GM18951 (cell line): ENCODE measurements at regions of chr18 and their contacts with region 1.

Region 1: GRCh38 chr18:23828426-23828825 is 139.2 kb downstream of the LAMA3 start:
- POLR2A ChIP-seq: no peak

Region 2: DNA sequence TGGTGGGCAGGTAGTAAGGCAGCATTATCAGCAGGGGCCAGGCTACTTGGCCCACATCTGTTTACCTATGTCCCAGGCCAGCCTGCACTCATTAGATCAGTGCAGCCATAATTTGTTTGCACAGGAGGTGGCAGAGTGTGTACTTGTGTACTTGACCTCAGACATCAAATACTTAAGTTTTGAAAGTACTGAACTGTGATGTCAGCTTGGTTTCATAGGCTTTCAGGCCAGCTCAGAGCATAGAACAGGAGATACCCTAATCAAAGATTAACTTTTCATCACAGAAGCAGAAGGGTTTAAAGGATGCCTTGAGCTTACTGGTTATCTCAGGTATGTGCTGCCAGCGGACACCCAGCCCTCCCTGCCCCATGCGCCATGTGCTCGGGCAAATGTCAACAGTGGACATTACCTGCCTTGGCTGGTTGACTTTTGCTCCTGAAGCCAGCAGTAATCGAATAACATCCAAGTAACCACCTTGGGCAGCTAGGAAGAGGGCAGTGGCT is 198.9 kb before region 1 on chr18:
- in situ Hi-C with region 1: loop called (anchors 5 kb)
- POLR2A ChIP-seq: no peak

Region 3: DNA sequence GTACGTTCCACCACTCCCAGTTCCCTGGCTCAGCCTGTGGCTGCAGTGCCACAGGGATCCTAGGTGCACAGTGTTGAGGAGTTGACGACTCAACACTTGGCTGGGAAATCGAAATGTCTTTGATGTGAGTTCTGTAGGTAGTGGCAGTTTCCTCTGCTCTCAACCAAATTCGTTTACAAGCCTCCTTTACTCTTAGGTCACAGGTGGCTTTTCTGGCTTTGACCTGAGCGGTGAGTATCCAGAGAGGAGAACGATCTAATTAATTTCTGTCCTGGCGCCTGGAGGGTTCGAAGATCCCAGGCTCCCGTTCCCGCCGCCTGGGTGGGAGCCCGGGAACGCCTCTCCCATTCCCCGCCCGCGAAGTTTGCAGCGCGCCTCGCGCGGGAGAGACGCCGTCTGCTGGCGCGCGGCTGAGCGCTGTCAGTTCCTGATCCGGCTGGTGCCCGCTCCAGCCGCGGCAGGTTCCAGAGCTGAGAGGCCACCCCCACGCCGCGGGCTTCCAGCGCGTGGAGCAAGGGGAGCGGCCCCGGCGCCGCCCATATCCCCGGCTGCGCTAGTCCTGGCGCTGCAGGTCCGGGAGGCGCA is 139.3 kb before region 1 on chr18 and contains the start of gene LAMA3:
- in situ Hi-C with region 1: no loop called
- POLR2A ChIP-seq: no peak

Region 4: DNA sequence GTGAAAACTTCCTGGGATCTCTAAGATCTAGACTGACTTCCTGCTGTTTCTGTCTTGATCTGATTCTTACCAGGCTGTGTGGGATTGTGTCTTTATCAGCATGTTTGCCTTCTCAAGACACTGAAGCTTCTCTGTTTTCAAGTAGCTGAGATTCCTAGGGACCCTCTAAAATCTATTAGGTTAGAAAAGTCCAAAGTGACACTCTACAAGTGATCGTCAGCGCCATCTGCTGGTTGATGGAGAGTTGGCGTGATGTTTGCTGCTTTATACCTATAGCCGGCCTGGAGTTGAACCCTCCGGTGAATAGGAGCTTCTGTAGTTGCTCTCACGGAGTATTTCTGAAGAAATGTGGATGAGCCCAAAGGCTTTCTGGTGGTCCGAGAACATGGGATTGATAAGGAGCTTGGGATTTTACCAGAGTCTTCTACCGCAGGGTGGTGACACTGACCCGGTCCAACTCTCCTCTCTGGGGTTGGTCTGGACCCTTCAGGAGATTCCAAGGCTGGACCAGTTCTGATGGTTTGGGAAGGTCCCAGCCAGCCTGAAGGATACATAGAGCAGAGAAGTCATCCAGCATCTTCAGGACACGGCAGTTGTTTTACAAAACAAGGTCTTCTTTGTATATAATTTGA is 90.1 kb after region 1 on chr18:
- in situ Hi-C with region 1: loop called (anchors 10 kb)
- POLR2A ChIP-seq: no peak